Heart left ventricle (tissue), 16 donors: ENCODE measurements at regions of chr7 and their contacts with region 1.

Region 1: DNA sequence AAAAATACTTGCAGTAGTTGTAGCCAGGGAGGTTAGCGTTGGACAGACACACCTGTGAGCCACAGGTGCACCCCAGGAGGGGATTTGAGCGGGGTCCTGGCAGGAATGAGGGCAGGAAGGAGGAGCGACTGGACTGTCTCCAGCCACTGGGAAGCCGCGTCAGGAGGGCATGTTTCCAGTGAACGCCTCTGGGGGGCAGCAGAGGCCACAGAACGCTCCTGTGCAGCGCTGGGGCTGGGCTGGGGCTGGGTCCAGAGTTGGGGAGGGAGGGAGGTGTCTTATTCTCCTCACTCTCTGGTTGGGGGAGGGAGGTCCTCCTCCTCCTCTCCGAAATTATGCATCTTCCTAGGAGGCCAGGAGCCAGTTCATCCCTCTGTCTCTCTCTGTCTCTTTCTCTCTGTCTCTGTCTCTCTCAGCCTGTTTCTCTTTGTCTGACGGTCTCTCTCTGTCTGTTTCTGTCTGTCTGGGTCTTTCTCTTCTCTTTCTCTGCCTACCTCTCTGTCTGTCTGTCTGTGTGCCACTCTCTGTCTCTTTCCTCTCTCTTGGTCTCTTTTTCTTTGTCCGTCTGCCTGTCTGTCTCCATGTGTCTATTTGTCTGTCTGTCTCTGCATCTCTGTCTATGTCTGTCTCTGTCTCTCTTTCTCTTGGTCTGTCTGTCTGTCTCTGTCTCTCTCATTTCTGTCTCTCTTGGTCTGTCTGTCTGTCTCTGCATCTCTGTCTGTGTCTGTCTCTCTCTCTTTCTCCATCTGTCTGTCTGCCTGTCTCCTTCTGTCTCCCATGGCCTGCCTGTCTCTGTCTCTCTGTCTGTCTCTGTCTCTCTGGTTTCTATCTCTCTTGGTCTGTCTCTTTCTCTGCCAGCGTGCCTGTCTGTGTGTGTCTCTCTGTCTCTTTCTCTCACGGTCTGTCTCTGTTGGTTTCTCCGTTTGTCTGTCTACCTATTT is 9.9 kb upstream of the PSMG3 start:
- DNase-seq: peak; percentile 69 to 88 (median 75)
- ATAC-seq: peak; percentile 82 to 93 (median 90)
- H3K4me3 ChIP-seq: no peak overlapping the region
- H3K27ac ChIP-seq: no peak overlapping the region
- H3K4me1 ChIP-seq: peaks cover 0 to 17% (median 6%) of the 10 kb centered on the region in 12 donors
- H3K27me3 ChIP-seq: no peaks in the 10 kb centered on the region
- CTCF ChIP-seq: peak; percentile 79 to 90 (median 84)
- POLR2A ChIP-seq: no peak

Region 2: DNA sequence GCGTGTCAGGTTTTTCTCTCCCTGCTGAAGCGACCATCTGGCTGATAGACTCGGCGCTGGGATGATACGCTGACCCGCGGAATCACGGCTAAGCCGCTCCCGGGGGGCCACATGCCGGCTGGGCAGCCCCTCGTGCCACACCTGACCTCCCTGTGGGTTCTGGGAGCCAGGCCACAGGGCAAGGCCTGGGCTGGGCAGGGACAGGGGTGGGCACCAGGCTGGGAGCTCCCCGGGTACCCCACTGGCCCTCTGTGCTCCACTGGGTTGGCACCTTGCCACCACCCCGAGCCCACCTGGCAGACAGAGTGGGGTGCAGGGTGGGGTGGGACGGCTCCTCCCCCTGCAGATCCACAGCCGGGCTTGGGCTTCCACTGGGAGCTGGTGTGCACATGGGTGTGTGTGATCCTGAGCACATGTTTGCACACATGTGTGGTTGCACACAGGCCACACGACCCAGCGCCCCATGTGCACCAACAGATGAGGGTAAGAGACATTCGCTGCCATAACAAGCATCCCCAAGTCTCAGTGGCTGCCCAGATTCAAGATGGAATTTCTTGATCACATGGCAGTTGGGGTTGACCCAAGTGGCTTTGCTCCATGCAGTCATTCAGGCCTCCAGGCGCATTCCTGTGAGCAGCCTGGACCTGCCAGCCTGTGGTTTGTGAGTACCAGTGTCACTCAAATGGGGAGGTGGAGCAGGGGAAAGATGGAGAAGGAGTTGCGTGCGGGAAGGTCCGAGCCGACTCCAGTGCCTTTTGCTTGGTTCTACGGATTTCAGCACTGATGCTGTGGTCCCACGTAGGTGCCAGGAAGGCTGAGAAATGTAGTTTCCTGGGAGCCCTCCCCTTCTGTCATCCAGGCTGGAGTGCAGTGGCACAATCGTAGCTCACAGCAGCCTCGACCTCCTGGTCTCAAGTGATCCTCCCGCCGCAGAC is 267.3 kb before region 1 on chr7:
- intact Hi-C with region 1: no loop called
- DNase-seq: peak in 2 of 5 donors; percentile 20 to 44
- ATAC-seq: peak in 1 of 4 donors; percentile 31
- H3K4me3 ChIP-seq: no peak overlapping the region
- H3K27ac ChIP-seq: no peak overlapping the region
- H3K4me1 ChIP-seq: no peaks in the 10 kb centered on the region
- H3K27me3 ChIP-seq: peaks cover 0 to 7% (median 0%) of the 10 kb centered on the region in 9 donors
- CTCF ChIP-seq: no peak
- POLR2A ChIP-seq: no peak

Region 3: GRCh38 chr7:1758028-1758858 is 178.5 kb after region 1 on chr7:
- intact Hi-C with region 1: loop called in 9 of 10 experiments (anchors 2 to 10 kb)
- DNase-seq: peak in 3 of 5 donors; percentile 53 to 75 (median 63)
- ATAC-seq: peak; percentile 44 to 86 (median 68)
- H3K4me3 ChIP-seq: no peak overlapping the region
- H3K27ac ChIP-seq: peak overlapping the region in 4 of 12 donors; percentile 35 to 79 (median 72)
- H3K4me1 ChIP-seq: peaks cover 0 to 12% (median 0%) of the 10 kb centered on the region in 12 donors
- H3K27me3 ChIP-seq: peaks cover 0 to 5% (median 0%) of the 10 kb centered on the region in 9 donors
- CTCF ChIP-seq: peak; percentile 23 to 59 (median 43)
- POLR2A ChIP-seq: no peak

Region 4: DNA sequence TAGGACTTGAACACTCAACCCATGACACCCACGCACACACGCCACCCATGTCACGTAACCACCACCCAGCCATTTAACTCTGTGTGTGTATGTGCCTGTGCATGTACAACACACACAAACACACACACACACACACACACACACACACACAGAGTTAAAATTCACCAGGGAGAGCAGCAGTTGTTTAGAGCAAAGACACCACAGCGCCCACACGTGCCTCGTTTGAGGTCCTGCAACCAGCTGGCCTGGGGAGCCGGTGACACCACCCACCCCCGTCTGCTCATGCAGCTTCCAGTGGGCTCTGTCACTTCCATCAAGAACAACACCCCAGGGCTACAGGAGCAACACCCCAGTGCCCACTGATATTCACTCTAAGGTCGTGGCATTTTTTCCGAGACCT is 187.8 kb after region 1 on chr7:
- intact Hi-C with region 1: loop called in 1 of 10 experiments (anchors 10 kb)
- DNase-seq: no peak
- ATAC-seq: peak in 2 of 4 donors; percentile 31 to 41
- H3K4me3 ChIP-seq: no peak overlapping the region
- H3K27ac ChIP-seq: no peak overlapping the region
- H3K4me1 ChIP-seq: no peaks in the 10 kb centered on the region
- H3K27me3 ChIP-seq: no peaks in the 10 kb centered on the region
- CTCF ChIP-seq: peak in 6 of 12 donors; percentile 14 to 35 (median 19)
- POLR2A ChIP-seq: no peak

Region 5: DNA sequence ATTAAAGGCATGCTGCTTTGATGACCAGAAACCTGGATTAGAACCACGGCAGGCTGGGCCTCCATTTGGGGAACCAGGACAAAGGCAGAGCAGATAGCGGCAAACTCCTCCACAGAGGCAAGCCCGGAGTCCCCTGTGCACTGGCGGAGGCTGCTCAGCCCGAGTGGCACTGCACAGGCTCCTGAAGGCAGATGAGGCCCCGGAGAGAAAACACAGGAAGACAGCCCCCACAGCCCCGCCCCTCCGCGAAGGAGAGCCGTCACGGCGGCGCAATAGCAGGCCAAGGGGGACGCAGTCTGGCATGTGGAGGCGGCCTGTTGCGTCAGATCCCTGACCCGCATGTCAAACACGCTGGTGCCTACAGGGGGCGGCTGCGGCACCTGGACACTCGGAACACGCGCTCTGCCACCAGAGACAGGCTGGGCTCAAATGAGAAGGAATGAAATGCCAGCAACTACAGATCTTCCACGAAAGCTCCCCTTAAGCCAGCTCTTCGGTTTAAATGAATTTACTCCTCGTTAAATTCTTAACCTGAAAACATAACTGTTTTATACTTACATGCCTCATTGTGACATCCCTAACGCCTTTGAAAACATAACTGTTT is 524.5 kb after region 1 on chr7:
- intact Hi-C with region 1: loop called in 2 of 10 experiments (anchors 10 kb)
- DNase-seq: peak; percentile 88 to 92 (median 89)
- ATAC-seq: peak; percentile 67 to 89 (median 82)
- H3K4me3 ChIP-seq: peak overlapping the region in 8 of 12 donors; percentile 2 to 31 (median 20)
- H3K27ac ChIP-seq: peak overlapping the region in 8 of 12 donors; percentile 4 to 69 (median 38)
- H3K4me1 ChIP-seq: peaks cover 0 to 49% (median 28%) of the 10 kb centered on the region in 12 donors
- H3K27me3 ChIP-seq: no peaks in the 10 kb centered on the region
- CTCF ChIP-seq: peak; percentile 55 to 86 (median 71)
- POLR2A ChIP-seq: no peak

Region 6: GRCh38 chr7:2214636-2215035 is 634.9 kb after region 1 on chr7:
- intact Hi-C with region 1: loop called (anchors 1 to 10 kb)
- DNase-seq: peak in 2 of 5 donors; percentile 27 to 47
- ATAC-seq: peak in 2 of 4 donors; percentile 6 to 30
- H3K4me3 ChIP-seq: no peak overlapping the region
- H3K27ac ChIP-seq: peak overlapping the region in 10 of 12 donors; percentile 48 to 86 (median 64)
- H3K4me1 ChIP-seq: peaks cover 0 to 24% (median 7%) of the 10 kb centered on the region in 12 donors
- H3K27me3 ChIP-seq: no peaks in the 10 kb centered on the region
- CTCF ChIP-seq: no peak
- POLR2A ChIP-seq: no peak

Region 7: DNA sequence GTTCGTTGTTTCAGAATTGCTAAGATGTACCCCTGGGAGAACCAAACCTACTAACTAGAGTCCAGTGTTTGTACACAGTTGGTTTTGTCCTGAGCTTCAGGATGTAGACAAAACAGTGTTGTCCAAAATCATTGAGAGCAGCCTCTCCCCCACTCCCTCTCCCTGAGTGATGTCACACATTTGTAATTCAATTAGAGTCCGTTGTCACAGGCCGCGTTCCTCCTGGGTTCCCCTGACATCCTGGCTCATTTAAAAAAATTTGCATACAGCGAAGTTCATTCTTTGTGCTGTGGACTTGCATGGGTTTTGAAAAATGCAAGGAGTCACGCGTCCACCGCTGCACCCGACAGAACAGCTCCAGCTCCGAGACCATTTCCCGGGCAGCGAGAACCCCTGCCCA is 886.2 kb after region 1 on chr7:
- intact Hi-C with region 1: loop called in 1 of 10 experiments (anchors 5 kb)
- DNase-seq: peak in 1 of 5 donors; percentile 14
- ATAC-seq: no peak
- H3K4me3 ChIP-seq: no peak overlapping the region
- H3K27ac ChIP-seq: no peak overlapping the region
- H3K4me1 ChIP-seq: peaks cover 0 to 9% (median under 1%) of the 10 kb centered on the region in 12 donors
- H3K27me3 ChIP-seq: peaks cover 0 to 6% (median 0%) of the 10 kb centered on the region in 9 donors
- CTCF ChIP-seq: no peak
- POLR2A ChIP-seq: no peak